ENCODE measurements at regions of chrX and their contacts with region 1.

Region 1: GRCh38 chrX:32673193-32673592 is 538.2 kb downstream of the DMD start:
- DNase-seq: no peak
- H3K4me3 Mint-ChIP-seq: no peak overlapping the region
- H3K27ac Mint-ChIP-seq: no peak overlapping the region
- H3K4me1 Mint-ChIP-seq: no peaks in the 10 kb centered on the region
- H3K27me3 Mint-ChIP-seq: no peaks in the 10 kb centered on the region

Region 2: GRCh38 chrX:32530802-32531403 is 142.3 kb before region 1 on chrX:
- CTCF ChIA-PET with region 1: no interaction called
- POLR2A ChIA-PET with region 1: no interaction called
- intact Hi-C with region 1: loop called (anchors 2 kb)
- DNase-seq: no peak
- H3K4me3 Mint-ChIP-seq: no peak overlapping the region
- H3K27ac Mint-ChIP-seq: no peak overlapping the region
- H3K4me1 Mint-ChIP-seq: no peaks in the 10 kb centered on the region
- H3K27me3 Mint-ChIP-seq: no peaks in the 10 kb centered on the region

Region 3: DNA sequence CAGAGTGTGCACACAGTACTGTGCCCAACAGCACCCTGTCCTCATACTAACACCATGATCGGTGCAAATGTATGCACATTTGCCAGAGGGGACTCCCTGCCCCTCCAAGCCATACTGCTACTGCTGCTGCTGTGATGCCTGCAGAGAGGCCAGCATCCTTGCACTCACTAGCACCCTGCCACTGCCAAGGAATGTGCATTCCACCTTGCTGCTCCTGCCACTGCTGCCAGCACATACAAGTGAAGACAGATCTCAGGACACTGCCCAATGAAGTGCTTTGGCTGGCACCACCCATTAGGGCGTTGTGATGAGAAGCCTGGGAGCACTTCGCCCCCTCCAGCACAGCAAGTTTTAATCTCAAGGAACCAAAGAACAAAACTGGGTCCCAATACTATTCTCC is 684.4 kb after region 1 on chrX:
- CTCF ChIA-PET with region 1: no interaction called
- POLR2A ChIA-PET with region 1: no interaction called
- intact Hi-C with region 1: no loop called
- DNase-seq: no peak
- H3K4me3 Mint-ChIP-seq: no peak overlapping the region
- H3K27ac Mint-ChIP-seq: no peak overlapping the region
- H3K4me1 Mint-ChIP-seq: no peaks in the 10 kb centered on the region
- H3K27me3 Mint-ChIP-seq: no peaks in the 10 kb centered on the region

Measured in activated CD4-positive, alpha-beta memory T cell treated with anti-CD3 and anti-CD28 coated beads for 36 hours (primary cell).